Psoas muscle (tissue), 8 donors: ENCODE measurements at regions of chr2 and their contacts with region 1.

Region 1: GRCh38 chr2:184004289-184004947 is 593.9 kb upstream of the ZNF804A start:
- DNase-seq: no peak
- ATAC-seq: peak; percentile 78 to 93 (median 88)
- H3K4me3 ChIP-seq: no peak overlapping the region
- H3K27ac ChIP-seq: peak overlapping the region; percentile 51
- H3K4me1 ChIP-seq: peaks cover 8% of the 10 kb centered on the region
- H3K27me3 ChIP-seq: no peaks in the 10 kb centered on the region
- CTCF ChIP-seq: no peak

Region 2: DNA sequence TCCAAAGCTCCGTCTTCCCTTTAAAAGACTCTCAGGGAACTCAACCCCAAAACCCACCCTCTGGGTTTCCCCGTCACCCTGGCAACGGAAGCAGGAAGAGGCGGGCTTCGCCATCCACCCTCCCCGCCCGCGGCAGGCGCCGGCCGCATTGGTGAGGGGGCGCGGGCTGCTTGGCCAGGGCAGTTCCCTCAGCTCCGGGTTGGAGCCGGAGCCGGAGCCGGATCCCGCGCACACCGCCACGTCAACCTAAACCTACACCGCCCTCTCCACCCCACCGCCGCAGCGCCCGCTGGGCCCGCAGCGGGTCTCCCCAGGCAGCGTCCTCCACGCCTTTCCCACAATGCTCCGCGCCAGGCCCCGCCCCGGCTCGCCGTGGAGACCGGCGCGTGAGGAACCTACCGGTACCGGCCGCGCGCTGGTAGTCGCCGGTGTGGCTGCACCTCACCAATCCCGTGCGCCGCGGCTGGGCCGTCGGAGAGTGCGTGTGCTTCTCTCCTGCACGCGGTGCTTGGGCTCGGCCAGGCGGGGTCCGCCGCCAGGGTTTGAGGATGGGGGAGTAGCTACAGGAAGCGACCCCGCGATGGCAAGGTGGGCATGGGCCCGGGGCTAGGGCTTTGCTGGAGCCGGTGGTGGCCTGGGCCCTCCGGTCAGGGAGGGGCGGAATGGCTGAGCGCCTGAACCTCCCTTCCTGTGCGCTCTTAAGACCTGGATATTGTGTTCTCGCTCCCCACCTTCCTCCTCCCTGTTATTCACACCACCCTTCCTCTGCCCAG is 1288.3 kb before region 1 on chr2 and contains the start of gene DNAJC10:
- intact Hi-C with region 1: loop called in 1 of 2 experiments (anchors 10 kb)
- DNase-seq: peak; percentile 87 to 91
- ATAC-seq: peak; percentile 92 to 98 (median 98)
- H3K4me3 ChIP-seq: peak within 1 kb of the TSS; percentile 84
- H3K27ac ChIP-seq: peak within 1 kb of the TSS; percentile 68
- H3K4me1 ChIP-seq: peaks cover 14% of the 10 kb centered on the region
- H3K27me3 ChIP-seq: no peaks in the 10 kb centered on the region
- CTCF ChIP-seq: no peak
- total RNA-seq, gene DNAJC10: 25.8 to 31.1 (median 28.1) TPM